PC-9 (cell line): ENCODE measurements at regions of chr7 and their contacts with region 1.

Region 1: GRCh38 chr7:66859794-66860645 is 61.0 kb upstream of the TMEM248 start:
- DNase-seq: no peak
- H3K4me3 ChIP-seq: no peak overlapping the region
- H3K27ac ChIP-seq: no peak overlapping the region
- H3K4me1 ChIP-seq: no peaks in the 10 kb centered on the region
- H3K27me3 ChIP-seq: no peaks in the 10 kb centered on the region
- CTCF ChIP-seq: no peak

Region 2: GRCh38 chr7:66517212-66517909 is 342.7 kb before region 1 on chr7:
- CTCF ChIA-PET with region 1: no interaction called
- POLR2A ChIA-PET with region 1: no interaction called
- intact Hi-C with region 1: no loop called
- DNase-seq: no peak
- H3K4me3 ChIP-seq: no peak overlapping the region
- H3K27ac ChIP-seq: no peak overlapping the region
- H3K4me1 ChIP-seq: no peaks in the 10 kb centered on the region
- H3K27me3 ChIP-seq: no peaks in the 10 kb centered on the region
- CTCF ChIP-seq: no peak

Region 3: GRCh38 chr7:66768865-66769832 is 90.9 kb before region 1 on chr7:
- CTCF ChIA-PET with region 1: interaction called, 10 read pairs
- POLR2A ChIA-PET with region 1: no interaction called
- intact Hi-C with region 1: no loop called
- DNase-seq: no peak
- H3K4me3 ChIP-seq: no peak overlapping the region
- H3K27ac ChIP-seq: no peak overlapping the region
- H3K4me1 ChIP-seq: no peaks in the 10 kb centered on the region
- H3K27me3 ChIP-seq: no peaks in the 10 kb centered on the region
- CTCF ChIP-seq: no peak

Region 4: GRCh38 chr7:66873476-66873875 is 13.5 kb after region 1 on chr7:
- CTCF ChIA-PET with region 1: no interaction called
- POLR2A ChIA-PET with region 1: interaction called, 12 read pairs
- intact Hi-C with region 1: no loop called
- DNase-seq: no peak
- H3K4me3 ChIP-seq: no peak overlapping the region
- H3K27ac ChIP-seq: no peak overlapping the region
- H3K4me1 ChIP-seq: no peaks in the 10 kb centered on the region
- H3K27me3 ChIP-seq: no peaks in the 10 kb centered on the region
- CTCF ChIP-seq: no peak